ENCODE measurements at regions of chr1 and their contacts with region 1.

Region 1: GRCh38 chr1:32702599-32703478 is at the start of gene SYNC:
- DNase-seq: peak; percentile 92
- H3K4me3 ChIP-seq: peak within 1 kb of the TSS; percentile 57
- H3K27ac ChIP-seq: peak within 1 kb of the TSS; percentile 69
- H3K4me1 ChIP-seq: peaks cover 9% of the 10 kb centered on the region
- H3K27me3 ChIP-seq: no peaks in the 10 kb centered on the region
- CTCF ChIP-seq: no peak
- total RNA-seq, gene SYNC: 6.6 to 10.6 TPM

Region 2: DNA sequence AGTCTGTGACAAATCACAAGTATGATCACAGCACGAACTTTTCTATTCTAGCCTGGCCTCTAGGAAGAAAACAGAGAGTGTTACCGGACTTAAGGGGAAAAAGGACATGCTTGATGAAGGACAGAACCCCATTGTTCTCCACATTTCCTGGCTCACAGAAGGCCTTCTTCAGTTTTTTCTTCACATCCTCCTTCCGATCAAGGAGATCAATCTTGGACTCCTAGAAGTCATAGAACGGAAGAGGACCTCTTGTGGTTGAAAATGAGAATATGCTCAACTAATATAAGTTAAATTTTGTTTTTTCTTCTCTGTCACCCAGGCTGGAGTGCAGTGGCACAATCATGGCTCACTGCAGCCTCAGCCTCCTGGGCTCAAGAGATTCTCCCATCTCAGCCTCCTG is 84.0 kb after region 1 on chr1:
- intact Hi-C with region 1: loop called (anchors 5 kb)
- DNase-seq: no peak
- H3K4me3 ChIP-seq: no peak overlapping the region
- H3K27ac ChIP-seq: no peak overlapping the region
- H3K4me1 ChIP-seq: no peaks in the 10 kb centered on the region
- H3K27me3 ChIP-seq: no peaks in the 10 kb centered on the region
- CTCF ChIP-seq: peak; percentile 14

Region 3: DNA sequence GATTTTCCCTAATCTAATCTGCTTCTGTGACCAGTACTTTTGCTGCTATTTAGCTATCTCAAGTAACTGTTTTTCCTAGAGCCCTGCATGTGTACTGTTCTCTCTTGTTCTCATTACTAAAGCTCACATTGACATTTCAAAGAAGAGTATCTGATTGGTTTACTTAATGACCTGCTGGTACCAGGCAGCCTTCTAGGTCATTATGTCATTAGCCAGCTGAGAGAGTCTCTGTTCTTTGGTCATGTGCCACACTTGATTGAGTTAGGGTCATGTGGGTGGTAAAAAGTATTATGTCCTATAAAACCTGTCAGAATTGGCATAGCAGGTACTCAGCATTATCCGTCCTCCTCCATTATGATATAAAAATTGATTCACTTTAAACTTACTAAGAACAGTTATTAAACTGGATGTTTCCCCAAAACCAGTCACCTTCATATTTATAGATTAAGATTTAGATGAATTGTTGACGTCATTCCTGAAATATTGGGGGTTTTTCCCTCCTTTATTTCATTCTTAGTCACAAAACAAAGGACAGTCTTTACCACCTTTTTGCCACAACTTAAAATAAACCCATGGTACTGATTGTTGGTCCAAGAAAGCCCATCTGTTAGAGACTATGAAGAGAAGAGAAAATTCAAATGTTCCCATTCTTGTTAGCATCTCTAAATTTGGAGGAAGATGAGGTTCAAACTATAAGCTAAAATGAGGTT is 145.7 kb after region 1 on chr1:
- intact Hi-C with region 1: no loop called
- DNase-seq: no peak
- H3K4me3 ChIP-seq: no peak overlapping the region
- H3K27ac ChIP-seq: no peak overlapping the region
- H3K4me1 ChIP-seq: no peaks in the 10 kb centered on the region
- H3K27me3 ChIP-seq: no peaks in the 10 kb centered on the region
- CTCF ChIP-seq: no peak

Region 4: GRCh38 chr1:32869923-32870614 is 167.2 kb after region 1 on chr1:
- intact Hi-C with region 1: loop called (anchors 10 kb)
- DNase-seq: no peak
- H3K4me3 ChIP-seq: no peak overlapping the region
- H3K27ac ChIP-seq: no peak overlapping the region
- H3K4me1 ChIP-seq: peaks cover 3% of the 10 kb centered on the region
- H3K27me3 ChIP-seq: peaks cover 21% of the 10 kb centered on the region
- CTCF ChIP-seq: no peak

Region 5: GRCh38 chr1:33055210-33056008 is 352.6 kb after region 1 on chr1:
- intact Hi-C with region 1: no loop called
- DNase-seq: peak; percentile 78
- H3K4me3 ChIP-seq: no peak overlapping the region
- H3K27ac ChIP-seq: peak overlapping the region; percentile 64
- H3K4me1 ChIP-seq: no peaks in the 10 kb centered on the region
- H3K27me3 ChIP-seq: no peaks in the 10 kb centered on the region
- CTCF ChIP-seq: peak; percentile 62